ENCODE measurements at regions of chr15 and their contacts with region 1.

Region 1: GRCh38 chr15:72231066-72231846 is at the start of gene PKM:
- DNase-seq: peak; percentile 81
- H3K4me3 ChIP-seq: peak within 1 kb of the TSS; percentile 98
- H3K27me3 ChIP-seq: no peaks in the 10 kb centered on the region
- CTCF ChIP-seq: no peak
- polyA plus RNA-seq, gene PKM: 2,101 and 2,533 TPM in 2 replicates

Region 2: GRCh38 chr15:72199711-72200212 is 31.5 kb before region 1 on chr15:
- CTCF ChIA-PET with region 1: interaction called, 16 read pairs
- POLR2A ChIA-PET with region 1: interaction called, 3 read pairs
- DNase-seq: no peak
- H3K4me3 ChIP-seq: no peak overlapping the region
- H3K27me3 ChIP-seq: no peaks in the 10 kb centered on the region
- CTCF ChIP-seq: peak; percentile 92

Region 3: DNA sequence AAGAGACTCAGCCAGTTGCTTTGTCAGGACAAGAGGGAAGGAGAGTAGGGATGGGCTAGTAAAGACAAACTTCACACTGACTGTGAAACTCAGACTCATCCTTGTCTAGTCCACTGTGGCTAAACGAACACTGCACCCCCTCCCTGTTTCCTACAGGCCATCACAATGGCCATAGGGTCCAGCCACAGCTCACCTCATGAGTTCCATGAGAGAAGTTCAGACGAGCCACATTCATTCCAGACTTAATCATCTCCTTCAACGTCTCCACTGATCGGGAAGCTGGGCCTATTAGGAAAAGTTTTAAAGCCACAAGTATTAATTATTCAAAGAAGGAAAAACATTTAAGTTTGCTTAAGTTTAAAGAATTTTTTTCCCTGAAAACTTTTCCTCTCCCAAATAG is 14.0 kb before region 1 on chr15:
- CTCF ChIA-PET with region 1: interaction called, 11 read pairs
- POLR2A ChIA-PET with region 1: interaction called, 14 read pairs
- DNase-seq: no peak
- H3K4me3 ChIP-seq: no peak overlapping the region
- H3K27me3 ChIP-seq: no peaks in the 10 kb centered on the region
- CTCF ChIP-seq: no peak

Region 4: DNA sequence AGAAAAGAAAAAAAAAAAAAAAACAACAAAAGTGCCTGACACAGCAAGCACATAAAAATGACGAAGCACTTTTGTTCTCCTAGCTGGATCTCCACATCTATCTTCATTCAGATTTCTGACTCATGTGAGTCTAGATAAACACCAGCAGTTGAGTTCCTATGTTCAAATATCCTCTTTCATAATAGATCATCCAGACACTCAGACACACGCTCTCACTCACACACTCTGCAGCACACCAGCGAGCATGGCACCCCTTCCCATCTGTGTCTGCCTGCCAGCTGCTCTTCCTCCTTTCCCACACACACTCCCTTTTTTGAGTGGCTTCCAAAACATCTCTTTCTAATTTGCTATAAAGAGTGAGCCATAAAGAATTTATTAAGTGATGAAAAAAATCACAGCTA is 108.5 kb after region 1 on chr15:
- CTCF ChIA-PET with region 1: no interaction called
- POLR2A ChIA-PET with region 1: no interaction called
- DNase-seq: peak; percentile 94
- H3K4me3 ChIP-seq: no peak overlapping the region
- H3K27me3 ChIP-seq: no peaks in the 10 kb centered on the region
- CTCF ChIP-seq: no peak

Region 5: DNA sequence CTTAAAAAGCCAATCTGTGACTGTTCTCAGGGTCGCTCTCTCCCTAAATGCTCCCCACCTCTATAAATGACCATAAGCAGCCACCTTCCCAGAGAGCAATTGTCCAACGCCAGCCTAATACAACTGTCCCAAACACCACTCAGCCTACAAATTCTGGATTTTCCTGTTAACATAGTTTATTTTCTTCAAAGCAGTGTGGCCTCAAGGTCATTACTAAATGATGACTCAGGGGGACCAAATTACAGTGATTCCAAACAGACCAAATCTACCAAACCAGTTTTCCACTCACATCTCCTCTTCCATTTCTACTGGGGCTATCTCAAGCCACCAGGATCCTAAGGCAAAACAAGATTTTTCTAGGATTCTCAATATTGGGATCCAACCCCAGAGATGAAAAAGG is 122.0 kb after region 1 on chr15:
- CTCF ChIA-PET with region 1: no interaction called
- POLR2A ChIA-PET with region 1: interaction called, 10 read pairs
- DNase-seq: no peak
- H3K4me3 ChIP-seq: no peak overlapping the region
- H3K27me3 ChIP-seq: no peaks in the 10 kb centered on the region
- CTCF ChIP-seq: no peak